HepG2 (cell line): ENCODE measurements at regions of chr2 and their contacts with region 1.

Region 1: GRCh38 chr2:143217512-143218115 is 88.4 kb downstream of the ARHGAP15 start:
- DNase-seq: no peak
- ATAC-seq: no peak
- H3K4me3 ChIP-seq: no peak overlapping the region
- H3K27ac ChIP-seq: no peak overlapping the region
- H3K4me1 ChIP-seq: no peaks in the 10 kb centered on the region
- H3K27me3 ChIP-seq: no peaks in the 10 kb centered on the region
- CTCF ChIP-seq: no peak
- EP300 ChIP-seq: no peak
- POLR2A ChIP-seq: no peak
- RAD21 ChIP-seq: no peak

Region 2: DNA sequence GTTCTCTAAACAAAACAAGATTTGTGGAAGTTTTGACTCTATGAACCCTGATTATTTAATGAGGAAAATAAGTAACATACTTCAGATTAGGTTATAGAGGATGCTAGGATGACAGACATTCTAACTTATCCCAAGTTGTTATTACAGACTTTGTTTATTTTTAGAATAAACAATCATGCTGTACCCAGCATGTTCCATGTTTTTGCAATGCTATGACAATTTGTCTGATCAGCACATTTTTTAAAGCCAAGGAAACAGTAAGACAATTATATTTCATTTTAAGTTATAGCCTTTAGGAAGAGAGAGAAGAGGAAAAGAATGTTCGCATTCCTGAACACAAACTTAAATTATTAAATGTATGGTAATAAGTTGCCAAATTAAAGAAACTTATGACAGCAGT is 220.4 kb before region 1 on chr2:
- CTCF ChIA-PET with region 1: no interaction called
- POLR2A ChIA-PET with region 1: no interaction called
- in situ Hi-C with region 1: no loop called
- intact Hi-C with region 1: no loop called
- DNase-seq: no peak
- ATAC-seq: no peak
- H3K4me3 ChIP-seq: no peak overlapping the region
- H3K27ac ChIP-seq: no peak overlapping the region
- H3K4me1 ChIP-seq: no peaks in the 10 kb centered on the region
- H3K27me3 ChIP-seq: no peaks in the 10 kb centered on the region
- CTCF ChIP-seq: no peak
- EP300 ChIP-seq: no peak
- POLR2A ChIP-seq: no peak
- RAD21 ChIP-seq: no peak

Region 3: GRCh38 chr2:143205106-143205764 is 12.4 kb before region 1 on chr2:
- CTCF ChIA-PET with region 1: no interaction called
- POLR2A ChIA-PET with region 1: no interaction called
- in situ Hi-C with region 1: no loop called
- intact Hi-C with region 1: loop called (anchors 1 kb)
- DNase-seq: peak; percentile 23
- ATAC-seq: peak; percentile 49
- H3K4me3 ChIP-seq: no peak overlapping the region
- H3K27ac ChIP-seq: no peak overlapping the region
- H3K4me1 ChIP-seq: no peaks in the 10 kb centered on the region
- H3K27me3 ChIP-seq: no peaks in the 10 kb centered on the region
- CTCF ChIP-seq: peak; percentile 36
- EP300 ChIP-seq: no peak
- POLR2A ChIP-seq: no peak
- RAD21 ChIP-seq: no peak

Region 4: DNA sequence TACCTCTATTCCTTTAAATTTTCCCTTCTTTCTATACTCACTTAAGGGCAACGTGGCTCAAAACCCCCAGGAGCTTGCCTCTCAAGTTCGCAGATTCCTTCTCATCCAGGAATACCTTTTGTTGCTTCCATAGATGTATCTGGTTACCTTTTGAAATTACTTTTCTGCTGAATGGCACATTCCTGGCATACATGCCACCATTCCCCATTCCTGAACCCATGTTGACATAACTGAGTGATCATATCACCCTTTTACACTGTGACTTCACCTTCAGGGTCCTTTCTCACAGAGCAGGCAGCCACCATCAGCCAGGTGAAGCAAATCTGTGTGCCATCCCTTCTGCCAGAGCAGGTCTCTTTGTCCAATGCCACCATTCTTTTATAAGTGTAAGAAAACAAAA is 527.4 kb after region 1 on chr2:
- CTCF ChIA-PET with region 1: no interaction called
- POLR2A ChIA-PET with region 1: no interaction called
- in situ Hi-C with region 1: no loop called
- intact Hi-C with region 1: no loop called
- DNase-seq: no peak
- ATAC-seq: no peak
- H3K4me3 ChIP-seq: no peak overlapping the region
- H3K27ac ChIP-seq: no peak overlapping the region
- H3K4me1 ChIP-seq: no peaks in the 10 kb centered on the region
- H3K27me3 ChIP-seq: peaks cover 0 to 2% of the 10 kb centered on the region in 2 experiments; a peak in 2 of 5 replicates
- CTCF ChIP-seq: no peak
- EP300 ChIP-seq: no peak
- POLR2A ChIP-seq: no peak
- RAD21 ChIP-seq: no peak